ENCODE measurements at regions of chr17 and their contacts with region 1.

Region 1: DNA sequence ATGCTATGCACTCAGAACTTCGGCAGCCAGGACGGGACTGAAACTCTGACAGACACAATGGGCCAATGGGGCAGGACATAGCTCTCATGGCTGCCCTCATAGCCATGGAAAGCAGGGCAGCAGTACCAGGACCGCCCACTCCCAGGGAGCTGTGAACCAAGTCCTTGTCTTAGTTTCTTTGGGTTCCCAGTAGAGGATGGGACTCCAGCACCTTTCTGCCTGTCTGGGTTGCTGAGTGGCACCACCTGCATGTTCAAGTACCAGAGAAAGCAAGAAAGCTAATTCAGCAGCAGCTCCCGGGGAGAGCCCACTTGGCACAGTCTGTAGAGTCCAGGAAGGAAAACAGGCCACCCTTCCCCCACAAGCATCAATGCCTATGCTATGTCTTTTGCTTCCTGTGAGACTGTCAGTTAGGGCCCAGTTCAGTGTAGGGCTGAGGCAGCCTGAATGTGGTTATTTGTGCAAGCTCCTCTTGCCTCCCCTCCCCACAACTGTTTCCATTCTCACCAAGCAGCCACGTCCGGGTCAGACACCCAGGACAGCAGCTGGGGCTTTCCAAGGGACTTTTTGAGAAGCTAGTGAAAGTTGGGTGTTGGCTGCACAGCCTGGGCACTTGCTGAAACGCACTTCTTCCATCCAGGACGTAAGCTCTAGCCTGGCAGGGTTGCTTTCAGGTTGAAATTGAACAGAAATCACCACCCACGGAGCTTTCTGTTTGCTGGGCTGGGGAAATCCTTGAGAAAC is 7.8 kb downstream of the SUPT4H1 start:
- DNase-seq: peak; percentile 97
- H3K4me3 Mint-ChIP-seq: peak overlapping the region; percentile 91
- H3K27ac Mint-ChIP-seq: peak overlapping the region; percentile 100
- H3K4me1 Mint-ChIP-seq: peaks cover 72% of the 10 kb centered on the region
- H3K27me3 Mint-ChIP-seq: no peaks in the 10 kb centered on the region

Region 2: DNA sequence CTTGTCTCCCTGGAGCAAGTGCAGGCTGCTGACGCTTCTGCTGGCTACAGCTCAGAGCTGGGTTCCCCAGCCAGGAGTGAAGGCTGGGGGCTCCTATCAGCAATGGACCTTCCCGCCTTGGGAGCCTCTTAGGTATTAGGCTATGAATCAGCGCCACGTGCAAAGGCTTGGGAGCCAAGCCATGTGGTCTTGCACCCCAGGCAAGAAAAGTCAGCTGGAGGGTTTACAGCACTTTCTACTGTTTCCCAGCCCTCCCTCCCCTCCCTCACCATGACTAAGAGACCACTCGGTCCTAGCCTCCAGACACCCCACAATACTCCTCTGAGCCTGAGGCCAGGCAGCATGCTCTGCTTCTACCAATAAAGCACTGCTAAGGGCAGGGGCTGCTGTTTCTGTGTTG is 139.4 kb before region 1 on chr17:
- intact Hi-C with region 1: no loop called
- DNase-seq: no peak
- H3K4me3 Mint-ChIP-seq: no peak overlapping the region
- H3K27ac Mint-ChIP-seq: no peak overlapping the region
- H3K4me1 Mint-ChIP-seq: peaks cover 2% of the 10 kb centered on the region
- H3K27me3 Mint-ChIP-seq: peaks cover 3% of the 10 kb centered on the region

Region 3: GRCh38 chr17:58317421-58318064 is 26.7 kb before region 1 on chr17:
- intact Hi-C with region 1: loop called (anchors 1 kb)
- DNase-seq: peak; percentile 90
- H3K4me3 Mint-ChIP-seq: peak overlapping the region; percentile 18
- H3K27ac Mint-ChIP-seq: peak overlapping the region; percentile 85
- H3K4me1 Mint-ChIP-seq: peaks cover 13% of the 10 kb centered on the region
- H3K27me3 Mint-ChIP-seq: no peaks in the 10 kb centered on the region

Region 4: GRCh38 chr17:58329035-58329809 is 15.0 kb before region 1 on chr17:
- intact Hi-C with region 1: loop called (anchors 1 kb)
- DNase-seq: peak; percentile 95
- H3K4me3 Mint-ChIP-seq: peak overlapping the region; percentile 91
- H3K27ac Mint-ChIP-seq: peak overlapping the region; percentile 96
- H3K4me1 Mint-ChIP-seq: peaks cover 45% of the 10 kb centered on the region
- H3K27me3 Mint-ChIP-seq: peaks cover 4% of the 10 kb centered on the region

Measured in activated CD4-positive, alpha-beta T cell treated with anti-CD3 and anti-CD28 coated beads, Interleukin-2, amount 10 ng/mL, durations not matched to agents 24 days and 14 days (primary cell).